Transverse colon (tissue), 4 donors: ENCODE measurements at regions of chr1 and their contacts with region 1.

Region 1: GRCh38 chr1:37449936-37450335 is 24.4 kb upstream of the ZC3H12A start:
- DNase-seq: no peak
- H3K4me3 ChIP-seq: no peak overlapping the region
- H3K27ac ChIP-seq: no peak overlapping the region
- H3K4me1 ChIP-seq: peaks cover 0 to 8% (median 0%) of the 10 kb centered on the region in 4 donors
- H3K27me3 ChIP-seq: peaks cover 24% of the 10 kb centered on the region
- CTCF ChIP-seq: no peak
- EP300 ChIP-seq: no peak
- POLR2A ChIP-seq: no peak

Region 2: DNA sequence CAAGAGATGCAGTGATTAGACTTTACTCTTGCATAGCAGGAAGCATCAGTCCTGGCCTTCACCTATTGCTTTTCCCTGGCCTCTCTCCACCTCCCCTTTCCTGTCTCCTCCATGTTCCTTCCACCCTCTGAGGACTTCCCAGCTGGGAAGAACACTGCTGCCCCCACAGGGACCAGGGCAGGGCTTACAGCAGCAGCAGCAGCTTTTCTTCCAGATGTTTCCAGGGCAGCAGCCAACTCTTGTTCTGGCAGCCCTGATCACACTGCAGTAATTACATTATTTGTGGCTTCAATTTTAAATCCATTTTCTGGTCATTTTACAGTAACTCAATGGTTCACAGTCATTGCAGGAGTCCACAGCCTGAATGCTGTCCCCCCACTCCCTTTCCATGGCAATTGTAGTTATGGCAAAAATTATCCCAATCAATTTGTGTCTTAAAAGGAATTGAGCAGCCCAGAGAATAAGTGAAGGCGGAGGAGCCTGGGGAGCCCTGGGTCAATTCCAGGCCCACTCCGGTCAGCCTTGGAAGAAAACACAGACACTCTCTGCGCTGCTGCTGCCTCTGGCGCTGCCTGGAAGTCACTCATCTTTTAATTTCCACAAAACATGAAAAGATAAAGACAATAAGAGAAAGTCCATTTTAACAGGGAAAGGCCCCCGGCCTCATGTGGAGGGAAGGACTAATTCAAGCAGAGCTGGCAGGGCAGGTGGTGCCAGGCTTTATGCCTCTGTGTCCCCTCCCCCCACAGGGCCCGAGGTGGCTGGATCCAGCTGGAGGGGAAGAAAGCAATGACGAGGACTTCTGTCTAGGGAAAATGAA is 564.2 kb before region 1 on chr1:
- in situ Hi-C with region 1: no loop called
- intact Hi-C with region 1: no loop called
- DNase-seq: no peak
- H3K4me3 ChIP-seq: no peak overlapping the region
- H3K27ac ChIP-seq: no peak overlapping the region
- H3K4me1 ChIP-seq: no peaks in the 10 kb centered on the region
- H3K27me3 ChIP-seq: peaks cover 8% of the 10 kb centered on the region
- CTCF ChIP-seq: no peak
- EP300 ChIP-seq: no peak
- POLR2A ChIP-seq: no peak

Region 3: DNA sequence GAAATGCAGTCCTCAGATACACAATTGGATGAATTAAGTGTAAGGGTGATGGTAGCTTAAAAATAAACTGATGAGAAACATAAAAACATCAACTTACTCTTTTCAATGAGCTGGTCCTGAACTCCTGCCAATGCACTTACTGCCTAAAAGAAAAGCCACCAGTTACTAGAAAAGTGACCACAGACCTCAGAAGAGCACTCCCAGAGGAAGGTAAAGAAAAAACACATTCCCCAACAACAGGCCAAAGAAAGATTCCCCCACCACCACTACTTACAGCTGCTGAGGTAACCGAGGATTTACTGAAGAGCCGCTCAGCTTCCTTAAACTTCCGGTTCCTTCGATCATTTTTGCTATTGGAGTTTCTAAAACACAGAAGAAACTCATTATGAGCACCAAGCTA is 59.2 kb after region 1 on chr1:
- in situ Hi-C with region 1: loop called in 1 of 4 experiments (anchors 10 kb)
- intact Hi-C with region 1: no loop called
- DNase-seq: no peak
- H3K4me3 ChIP-seq: no peak overlapping the region
- H3K27ac ChIP-seq: no peak overlapping the region
- H3K4me1 ChIP-seq: peaks cover 5 to 19% (median 8%) of the 10 kb centered on the region in 4 donors
- H3K27me3 ChIP-seq: no peaks in the 10 kb centered on the region
- CTCF ChIP-seq: no peak
- EP300 ChIP-seq: no peak
- POLR2A ChIP-seq: no peak

Region 4: GRCh38 chr1:37692078-37692833 is 242.3 kb after region 1 on chr1 and contains the start of gene CDCA8:
- in situ Hi-C with region 1: loop called in 3 of 4 experiments (anchors 10 to 25 kb)
- intact Hi-C with region 1: loop called (anchors 5 kb)
- DNase-seq: peak; percentile 99
- H3K4me3 ChIP-seq: peak within 1 kb of the TSS; percentile 57 to 96 (median 72)
- H3K27ac ChIP-seq: peak within 1 kb of the TSS; percentile 83 to 94 (median 88)
- H3K4me1 ChIP-seq: peaks cover 17 to 44% (median 31%) of the 10 kb centered on the region in 4 donors
- H3K27me3 ChIP-seq: no peaks in the 10 kb centered on the region
- CTCF ChIP-seq: peak; percentile 17 to 58 (median 41)
- EP300 ChIP-seq: no peak
- POLR2A ChIP-seq: peak; percentile 43
- total RNA-seq, gene CDCA8: 2.0 to 5.7 (median 2.1) TPM in 3 of 4 donors, not detected in the other